ENCODE measurements at regions of chr5 and their contacts with region 1.

Region 1: DNA sequence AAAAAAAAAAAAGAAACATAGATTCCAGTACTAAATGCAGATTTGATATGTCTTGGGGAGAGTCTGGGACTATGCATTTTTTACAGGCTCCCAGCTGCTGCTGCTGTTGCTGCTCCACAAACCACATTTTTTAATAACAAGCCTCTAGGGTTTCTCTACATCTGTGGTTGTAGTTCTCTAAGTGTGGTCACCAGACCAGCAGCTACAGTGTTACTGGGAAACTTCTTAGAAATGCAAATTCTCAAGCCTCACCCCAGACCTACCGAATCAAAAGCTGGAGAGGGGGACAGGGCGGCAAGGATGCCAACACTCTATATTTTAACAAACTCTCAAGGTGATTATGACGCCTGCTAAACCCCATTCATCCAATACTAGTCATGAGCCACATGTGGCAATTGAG is 293.4 kb upstream of the PTGER4 start:
- DNase-seq: peak; percentile 26
- H3K4me3 ChIP-seq: no peak overlapping the region
- H3K27ac ChIP-seq: no peak overlapping the region
- H3K4me1 ChIP-seq: peaks cover 49% of the 10 kb centered on the region
- H3K27me3 ChIP-seq: no peaks in the 10 kb centered on the region
- CTCF ChIP-seq: no peak

Region 2: DNA sequence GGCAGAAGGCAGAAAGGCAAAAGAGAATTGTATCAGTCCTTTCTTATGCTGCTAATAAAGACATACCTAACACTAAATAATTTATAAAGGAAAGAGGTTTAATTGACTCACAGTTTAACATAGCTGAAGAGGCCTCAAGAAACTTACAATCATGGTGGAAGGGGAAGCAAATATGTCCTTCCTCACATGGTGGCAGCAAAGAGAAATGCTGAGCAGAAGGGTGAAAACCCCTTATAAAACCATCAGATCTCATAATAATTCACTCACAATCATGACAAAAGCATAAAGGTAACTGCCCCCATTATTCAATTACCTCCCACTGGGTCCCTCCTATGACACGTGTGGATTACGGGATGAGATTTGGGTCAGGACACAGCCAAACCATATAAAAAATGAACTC is 19.0 kb before region 1 on chr5:
- CTCF ChIA-PET with region 1: no interaction called
- dilution Hi-C with region 1: no loop called
- in situ Hi-C with region 1: no loop called
- intact Hi-C with region 1: no loop called
- DNase-seq: no peak
- H3K4me3 ChIP-seq: no peak overlapping the region
- H3K27ac ChIP-seq: no peak overlapping the region
- H3K4me1 ChIP-seq: no peaks in the 10 kb centered on the region
- H3K27me3 ChIP-seq: no peaks in the 10 kb centered on the region
- CTCF ChIP-seq: peak in 1 of 2 donors; percentile 37

Region 3: GRCh38 chr5:40410231-40410861 is 24.1 kb after region 1 on chr5:
- CTCF ChIA-PET with region 1: interaction called, 3 read pairs
- dilution Hi-C with region 1: no loop called
- in situ Hi-C with region 1: no loop called
- intact Hi-C with region 1: loop called (anchors 1 kb)
- DNase-seq: peak; percentile 29
- H3K4me3 ChIP-seq: no peak overlapping the region
- H3K27ac ChIP-seq: peak overlapping the region; percentile 88
- H3K4me1 ChIP-seq: peaks cover 38% of the 10 kb centered on the region
- H3K27me3 ChIP-seq: no peaks in the 10 kb centered on the region
- CTCF ChIP-seq: no peak

Region 4: DNA sequence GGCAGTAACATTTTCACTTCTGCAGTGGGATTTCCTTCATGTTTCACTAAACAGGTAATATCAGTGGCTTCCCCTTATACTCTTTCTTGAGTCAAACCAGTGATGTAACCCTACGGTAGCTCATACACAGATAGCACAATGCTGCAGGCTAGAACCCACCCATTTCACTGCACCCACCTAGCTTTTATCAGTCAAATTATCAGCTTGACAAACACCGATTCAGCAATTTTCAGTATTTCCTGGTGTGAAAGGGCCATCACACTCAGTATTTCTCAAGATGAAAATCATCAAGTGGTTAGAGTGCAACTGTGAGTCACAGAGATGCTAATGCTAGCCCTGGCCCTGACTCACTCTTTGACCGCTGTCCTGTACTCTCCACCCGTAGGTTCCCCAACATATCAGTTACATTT is 51.2 kb after region 1 on chr5:
- CTCF ChIA-PET with region 1: no interaction called
- dilution Hi-C with region 1: loop called (anchors 5 kb)
- in situ Hi-C with region 1: no loop called
- intact Hi-C with region 1: loop called (anchors 2 kb)
- DNase-seq: peak; percentile 77
- H3K4me3 ChIP-seq: no peak overlapping the region
- H3K27ac ChIP-seq: no peak overlapping the region
- H3K4me1 ChIP-seq: peaks cover 13% of the 10 kb centered on the region
- H3K27me3 ChIP-seq: no peaks in the 10 kb centered on the region
- CTCF ChIP-seq: no peak

Region 5: GRCh38 chr5:40453689-40454088 is 67.4 kb after region 1 on chr5:
- CTCF ChIA-PET with region 1: no interaction called
- dilution Hi-C with region 1: no loop called
- in situ Hi-C with region 1: no loop called
- intact Hi-C with region 1: no loop called
- DNase-seq: no peak
- H3K4me3 ChIP-seq: no peak overlapping the region
- H3K27ac ChIP-seq: no peak overlapping the region
- H3K4me1 ChIP-seq: no peaks in the 10 kb centered on the region
- H3K27me3 ChIP-seq: no peaks in the 10 kb centered on the region
- CTCF ChIP-seq: no peak

Region 6: GRCh38 chr5:40551496-40552491 is 165.5 kb after region 1 on chr5:
- CTCF ChIA-PET with region 1: no interaction called
- dilution Hi-C with region 1: no loop called
- in situ Hi-C with region 1: no loop called
- intact Hi-C with region 1: loop called (anchors 5 kb)
- DNase-seq: peak; percentile 85
- H3K4me3 ChIP-seq: no peak overlapping the region
- H3K27ac ChIP-seq: peak overlapping the region; percentile 96
- H3K4me1 ChIP-seq: peaks cover 15% of the 10 kb centered on the region
- H3K27me3 ChIP-seq: no peaks in the 10 kb centered on the region
- CTCF ChIP-seq: no peak

Region 7: GRCh38 chr5:40679155-40679913 is 293.0 kb after region 1 on chr5:
- CTCF ChIA-PET with region 1: no interaction called
- dilution Hi-C with region 1: no loop called
- in situ Hi-C with region 1: loop called in 1 of 2 experiments (anchors 10 kb)
- intact Hi-C with region 1: loop called (anchors 1 kb)
- DNase-seq: peak; percentile 97
- H3K4me3 ChIP-seq: peak overlapping the region; percentile 68 to 86 (median 86)
- H3K27ac ChIP-seq: peak overlapping the region; percentile 95
- H3K4me1 ChIP-seq: peaks cover 56% of the 10 kb centered on the region
- H3K27me3 ChIP-seq: no peaks in the 10 kb centered on the region
- CTCF ChIP-seq: no peak

Measured in mammary epithelial cell (primary cell).